Activated CD8-positive, alpha-beta T cell treated with anti-CD3 and anti-CD28 coated beads, Interleukin-2, amount 10 ng/mL, durations not matched to agents 7 days and 5 days (primary cell): ENCODE measurements at regions of chr1 and their contacts with region 1.

Region 1: GRCh38 chr1:179809506-179810366 is 66.6 kb downstream of the FAM163A start:
- DNase-seq: peak; percentile 79
- ATAC-seq: peak; percentile 65
- H3K4me3 Mint-ChIP-seq: no peak overlapping the region
- H3K27ac Mint-ChIP-seq: no peak overlapping the region
- H3K4me1 Mint-ChIP-seq: peaks cover 6% of the 10 kb centered on the region
- H3K27me3 Mint-ChIP-seq: peaks cover 4% of the 10 kb centered on the region

Region 2: DNA sequence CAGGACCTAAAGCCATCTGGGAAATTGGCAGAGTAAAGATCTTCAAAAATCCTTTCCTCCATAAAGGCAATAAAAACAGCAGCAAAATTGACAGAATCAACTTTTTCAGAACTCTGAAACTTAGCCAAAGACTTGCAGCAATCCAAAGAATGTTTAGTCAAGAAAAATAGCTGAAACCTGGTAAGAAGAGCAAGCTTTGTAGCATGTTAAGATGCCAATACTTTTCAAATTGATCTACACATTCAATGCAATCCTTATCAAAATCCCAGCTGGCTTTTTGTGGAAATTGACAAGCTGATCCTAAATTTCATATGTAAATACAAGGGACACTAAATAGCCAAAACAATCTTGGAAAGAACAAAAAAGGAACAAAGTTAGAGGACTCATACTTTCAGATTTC is 90.5 kb before region 1 on chr1:
- CTCF ChIA-PET with region 1: interaction called, 655 read pairs
- POLR2A ChIA-PET with region 1: no interaction called
- DNase-seq: no peak
- ATAC-seq: no peak
- H3K4me3 Mint-ChIP-seq: no peak overlapping the region
- H3K27ac Mint-ChIP-seq: no peak overlapping the region
- H3K4me1 Mint-ChIP-seq: no peaks in the 10 kb centered on the region
- H3K27me3 Mint-ChIP-seq: no peaks in the 10 kb centered on the region

Region 3: DNA sequence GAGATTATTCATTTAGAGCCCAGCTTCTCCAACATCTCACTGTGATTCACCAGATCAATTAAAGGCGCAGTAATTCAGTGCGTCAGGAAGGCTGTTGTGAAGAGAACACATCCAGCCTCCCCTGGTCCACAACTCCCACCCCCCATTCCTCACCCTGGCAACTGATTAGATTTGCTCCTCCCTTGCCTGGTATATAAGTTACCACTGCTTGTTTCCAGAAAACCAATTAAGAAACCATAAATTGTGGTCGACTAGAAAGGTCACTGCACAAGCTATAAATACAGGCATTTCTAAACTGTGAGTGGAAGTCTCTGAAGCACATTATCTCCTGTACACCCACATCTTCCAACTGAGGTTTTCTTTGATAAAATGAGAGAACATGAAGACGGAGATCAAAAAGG is 24.7 kb before region 1 on chr1:
- CTCF ChIA-PET with region 1: interaction called, 13 read pairs
- POLR2A ChIA-PET with region 1: no interaction called
- DNase-seq: no peak
- ATAC-seq: no peak
- H3K4me3 Mint-ChIP-seq: no peak overlapping the region
- H3K27ac Mint-ChIP-seq: no peak overlapping the region
- H3K4me1 Mint-ChIP-seq: no peaks in the 10 kb centered on the region
- H3K27me3 Mint-ChIP-seq: peaks cover 11% of the 10 kb centered on the region

Region 4: GRCh38 chr1:179831852-179832699 is 22.3 kb after region 1 on chr1:
- CTCF ChIA-PET with region 1: interaction called, 62 read pairs
- POLR2A ChIA-PET with region 1: no interaction called
- DNase-seq: no peak
- ATAC-seq: peak; percentile 69
- H3K4me3 Mint-ChIP-seq: peak overlapping the region; percentile 34
- H3K27ac Mint-ChIP-seq: peak overlapping the region; percentile 43
- H3K4me1 Mint-ChIP-seq: peaks cover 24% of the 10 kb centered on the region
- H3K27me3 Mint-ChIP-seq: no peaks in the 10 kb centered on the region

Region 5: GRCh38 chr1:179867807-179868330 is 58.1 kb after region 1 on chr1:
- CTCF ChIA-PET with region 1: interaction called, 14 read pairs
- POLR2A ChIA-PET with region 1: no interaction called
- DNase-seq: peak; percentile 65
- ATAC-seq: peak; percentile 87
- H3K4me3 Mint-ChIP-seq: no peak overlapping the region
- H3K27ac Mint-ChIP-seq: peak overlapping the region; percentile 16
- H3K4me1 Mint-ChIP-seq: peaks cover 8% of the 10 kb centered on the region
- H3K27me3 Mint-ChIP-seq: no peaks in the 10 kb centered on the region

Region 6: GRCh38 chr1:179935909-179936496 is 126.3 kb after region 1 on chr1:
- CTCF ChIA-PET with region 1: no interaction called
- POLR2A ChIA-PET with region 1: no interaction called
- DNase-seq: no peak
- ATAC-seq: no peak
- H3K4me3 Mint-ChIP-seq: no peak overlapping the region
- H3K27ac Mint-ChIP-seq: no peak overlapping the region
- H3K4me1 Mint-ChIP-seq: no peaks in the 10 kb centered on the region
- H3K27me3 Mint-ChIP-seq: peaks cover 38% of the 10 kb centered on the region

Region 7: DNA sequence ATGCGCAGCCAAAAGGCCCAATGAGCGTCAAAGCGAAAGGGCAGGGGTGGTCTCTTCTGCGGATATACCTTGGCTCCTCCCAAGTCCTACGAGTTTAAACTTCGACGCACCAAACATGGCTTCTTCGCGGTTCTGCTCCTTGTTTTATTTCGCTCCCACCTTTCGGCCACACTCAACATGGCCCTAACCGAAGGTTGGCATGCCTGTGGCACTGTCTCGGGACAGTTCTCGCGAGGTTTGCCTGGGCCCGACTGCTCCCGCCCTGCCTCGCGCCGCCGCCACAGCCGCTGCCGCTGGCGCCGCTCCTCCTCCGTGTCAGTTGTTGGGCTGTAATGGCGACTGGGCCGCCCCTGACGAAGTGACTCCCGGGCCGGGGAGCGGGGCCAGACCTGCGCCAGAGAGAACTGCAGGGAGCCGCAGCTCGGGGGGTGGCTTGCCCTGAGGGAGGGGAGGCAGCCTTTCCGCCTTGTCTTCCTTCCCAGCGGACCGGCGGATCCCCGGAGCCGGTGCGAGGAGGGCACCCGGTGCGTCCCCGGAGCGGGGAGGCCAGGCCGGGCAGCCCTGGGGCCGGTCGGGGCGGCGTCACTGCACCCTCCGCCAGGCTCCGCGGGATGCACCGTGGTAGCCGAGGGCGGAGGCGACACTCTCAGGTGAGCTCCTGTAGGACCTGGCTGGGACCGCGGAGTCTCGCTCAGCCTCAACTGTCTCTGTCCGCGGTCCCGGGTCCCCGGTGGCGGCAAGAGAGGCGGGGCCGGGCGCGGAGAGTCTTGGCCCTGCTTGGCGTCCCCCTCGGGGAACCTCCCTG is 145.0 kb after region 1 on chr1 and contains the start of gene CEP350:
- CTCF ChIA-PET with region 1: interaction called, 10 read pairs
- POLR2A ChIA-PET with region 1: no interaction called
- DNase-seq: peak; percentile 99
- ATAC-seq: peak; percentile 94
- H3K4me3 Mint-ChIP-seq: peak within 1 kb of the TSS; percentile 79
- H3K27ac Mint-ChIP-seq: peak within 1 kb of the TSS; percentile 98
- H3K4me1 Mint-ChIP-seq: peaks cover 48% of the 10 kb centered on the region
- H3K27me3 Mint-ChIP-seq: no peaks in the 10 kb centered on the region
- total RNA-seq, gene CEP350: 59.3 to 65.1 TPM